Right ventricle myocardium inferior (tissue), 1 donor: ENCODE measurements at regions of chr11 and their contacts with region 1.

Region 1: GRCh38 chr11:109343242-109343641 is 78.7 kb upstream of the C11orf87 start:
- DNase-seq: no peak
- ATAC-seq: no peak

Region 2: DNA sequence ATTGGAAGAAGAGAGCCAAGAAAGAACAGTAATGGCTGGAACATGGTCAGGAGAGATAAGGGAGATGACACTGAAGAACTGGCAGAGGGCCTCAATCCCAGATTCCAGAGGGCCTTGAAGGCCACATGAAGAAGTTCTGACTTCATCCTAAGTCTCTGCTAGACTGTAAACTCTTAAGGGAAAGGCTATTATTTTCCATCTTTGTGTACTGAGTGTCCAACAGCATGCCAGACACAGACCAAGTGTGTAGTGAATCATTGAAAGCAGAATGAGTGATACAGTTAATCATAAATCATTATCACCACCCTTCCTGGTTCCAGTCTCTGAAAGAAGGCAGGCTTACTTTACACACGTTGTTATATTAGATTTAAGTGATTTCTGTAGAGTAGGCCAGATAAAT is 106.5 kb before region 1 on chr11:
- intact Hi-C with region 1: no loop called
- DNase-seq: no peak
- ATAC-seq: peak; percentile 26

Region 3: GRCh38 chr11:109306322-109306721 is 36.9 kb before region 1 on chr11:
- intact Hi-C with region 1: loop called (anchors 1 kb)
- DNase-seq: no peak
- ATAC-seq: no peak